ENCODE measurements at regions of chr3 and their contacts with region 1.

Region 1: GRCh38 chr3:38297947-38298711 is 16.0 kb downstream of the SLC22A14 start:
- DNase-seq: peak; percentile 20
- CTCF ChIP-seq: peak; percentile 38

Region 2: GRCh38 chr3:38210141-38210757 is 87.9 kb before region 1 on chr3:
- CTCF ChIA-PET with region 1: no interaction called
- POLR2A ChIA-PET with region 1: no interaction called
- DNase-seq: peak; percentile 41
- CTCF ChIP-seq: no peak

Region 3: GRCh38 chr3:38281895-38282675 is 16.0 kb before region 1 on chr3 and contains the start of gene SLC22A14:
- CTCF ChIA-PET with region 1: interaction called, 21 read pairs
- POLR2A ChIA-PET with region 1: no interaction called
- DNase-seq: no peak
- CTCF ChIP-seq: peak; percentile 10

Region 4: GRCh38 chr3:38308456-38308855 is 10.3 kb after region 1 on chr3:
- CTCF ChIA-PET with region 1: interaction called, 19 read pairs
- POLR2A ChIA-PET with region 1: no interaction called
- DNase-seq: no peak
- CTCF ChIP-seq: no peak

Region 5: GRCh38 chr3:38318766-38319671 is 20.9 kb after region 1 on chr3:
- CTCF ChIA-PET with region 1: no interaction called
- POLR2A ChIA-PET with region 1: no interaction called
- DNase-seq: no peak
- CTCF ChIP-seq: no peak

Measured in GM10248 (cell line).